HCT116 (cell line): ENCODE measurements at regions of chr14 and their contacts with region 1.

Region 1: DNA sequence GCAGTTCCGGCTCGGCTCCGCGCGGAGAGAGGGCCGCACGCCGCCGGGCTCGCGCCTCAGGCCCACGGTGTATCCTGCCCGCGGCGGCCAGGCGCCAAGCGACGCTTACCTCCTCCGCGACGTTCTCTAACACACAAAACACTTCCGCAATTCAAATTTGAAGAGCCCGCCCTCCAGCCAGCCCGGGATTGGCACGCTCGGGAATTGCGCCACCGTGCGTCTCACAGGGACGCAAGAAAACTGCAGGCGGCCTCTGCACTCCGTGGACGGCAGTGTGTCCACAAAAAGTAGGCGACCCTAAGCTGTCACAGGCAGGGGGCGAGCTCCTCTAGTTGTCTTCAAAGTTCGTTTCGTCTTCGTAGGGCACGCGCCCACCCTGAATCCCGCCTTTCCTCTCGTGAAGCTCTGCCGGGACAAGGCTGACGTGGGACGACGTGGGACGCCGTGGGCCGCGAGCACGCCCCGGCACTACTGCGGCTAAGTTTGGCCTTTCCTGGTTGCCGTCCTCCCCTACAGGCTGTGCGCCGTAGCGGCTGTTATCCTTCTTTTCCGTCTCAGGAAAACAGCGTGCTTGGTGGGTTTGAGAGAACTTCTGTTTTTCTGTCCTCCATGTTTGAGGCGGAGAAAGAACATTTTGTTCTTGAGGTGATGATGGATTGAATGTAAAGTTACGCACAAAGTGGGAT is at the start of gene MIS18BP1:
- DNase-seq: peak; percentile 92
- ATAC-seq: peak; percentile 88
- H3K4me3 ChIP-seq: peak within 1 kb of the TSS; percentile 81 to 91
- H3K27ac ChIP-seq: peak within 1 kb of the TSS; percentile 96
- H3K4me1 ChIP-seq: peaks cover 13 to 22% of the 10 kb centered on the region in 2 experiments
- H3K27me3 ChIP-seq: no peaks in the 10 kb centered on the region
- CTCF ChIP-seq: peak; percentile 59 to 72 (median 68); a peak in 5 of 6 replicates
- POLR2A ChIP-seq: peak; percentile 73
- RAD21 ChIP-seq: peak; percentile 38; the same call in 1 of the 2 replicates
- total RNA-seq, gene MIS18BP1: 37.9 TPM

Region 2: GRCh38 chr14:44897045-44897844 is 356.0 kb before region 1 on chr14:
- CTCF ChIA-PET with region 1: no interaction called
- POLR2A ChIA-PET with region 1: no interaction called
- RAD21 ChIA-PET with region 1: no interaction called
- intact Hi-C with region 1: loop called (anchors 5 kb)
- DNase-seq: peak; percentile 95
- ATAC-seq: peak; percentile 96
- H3K4me3 ChIP-seq: peak overlapping the region; percentile 59 to 71
- H3K27ac ChIP-seq: peak overlapping the region; percentile 83
- H3K4me1 ChIP-seq: peaks cover 8 to 14% of the 10 kb centered on the region in 2 experiments; a peak in 3 of 4 replicates
- H3K27me3 ChIP-seq: no peaks in the 10 kb centered on the region
- CTCF ChIP-seq: no peak
- POLR2A ChIP-seq: peak; percentile 38
- RAD21 ChIP-seq: no peak

Region 3: DNA sequence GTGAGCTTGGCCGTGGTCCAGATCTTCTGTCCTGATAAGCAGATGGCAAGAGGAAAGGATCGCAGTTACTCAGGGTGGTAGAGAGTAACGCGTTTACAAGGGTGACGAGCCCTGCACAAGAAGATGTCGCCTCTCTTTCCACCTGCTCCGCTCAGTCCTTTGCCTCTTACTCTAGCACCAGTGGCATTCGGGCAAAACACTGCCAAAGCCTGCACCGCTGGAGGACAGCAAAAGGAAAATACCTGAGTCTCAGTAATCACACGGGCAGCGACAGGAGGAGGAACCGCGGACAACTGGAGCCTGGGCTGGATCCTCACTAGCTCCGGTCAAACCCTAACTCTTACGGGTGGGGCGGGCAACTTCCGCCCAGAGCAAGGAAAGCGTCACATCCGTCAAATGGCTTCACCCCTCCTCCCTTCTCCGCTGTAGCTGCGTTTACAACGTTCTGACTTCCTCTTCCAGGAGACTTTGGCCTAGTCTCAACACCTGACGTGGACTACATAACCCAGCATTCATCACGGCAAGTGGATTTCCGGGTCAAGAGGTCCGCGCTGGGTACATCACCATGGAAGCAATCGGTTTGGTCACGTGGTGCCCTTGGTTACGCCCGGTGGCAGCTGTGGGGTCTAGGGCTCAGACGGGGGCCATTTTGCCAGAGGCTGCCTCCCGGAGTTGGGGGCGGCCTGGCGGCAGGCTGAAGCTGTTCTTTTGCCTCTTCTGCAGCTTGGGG is 291.4 kb before region 1 on chr14 and contains the starts of genes KLHL28 and TOGARAM1:
- CTCF ChIA-PET with region 1: no interaction called
- POLR2A ChIA-PET with region 1: no interaction called
- RAD21 ChIA-PET with region 1: no interaction called
- intact Hi-C with region 1: loop called (anchors 5 kb)
- DNase-seq: peak; percentile 98
- ATAC-seq: peak; percentile 93
- H3K4me3 ChIP-seq: peak within 1 kb of the TSS; percentile 72 to 94
- H3K27ac ChIP-seq: peak within 1 kb of the TSS; percentile 68
- H3K4me1 ChIP-seq: peaks cover 9 to 11% of the 10 kb centered on the region in 2 experiments; a peak in 3 of 4 replicates
- H3K27me3 ChIP-seq: no peaks in the 10 kb centered on the region
- CTCF ChIP-seq: no peak
- POLR2A ChIP-seq: peak; percentile 94
- RAD21 ChIP-seq: no peak
- total RNA-seq, gene KLHL28: 11.2 TPM
- total RNA-seq, gene TOGARAM1: 1.9 TPM

Region 4: GRCh38 chr14:44995196-44995595 is 258.0 kb before region 1 on chr14:
- CTCF ChIA-PET with region 1: no interaction called
- POLR2A ChIA-PET with region 1: no interaction called
- RAD21 ChIA-PET with region 1: no interaction called
- intact Hi-C with region 1: no loop called
- DNase-seq: no peak
- ATAC-seq: no peak
- H3K4me3 ChIP-seq: no peak overlapping the region
- H3K27ac ChIP-seq: no peak overlapping the region
- H3K4me1 ChIP-seq: no peaks in the 10 kb centered on the region
- H3K27me3 ChIP-seq: no peaks in the 10 kb centered on the region
- CTCF ChIP-seq: no peak
- POLR2A ChIP-seq: no peak
- RAD21 ChIP-seq: no peak

Region 5: GRCh38 chr14:45381091-45381490 is 127.9 kb after region 1 on chr14:
- CTCF ChIA-PET with region 1: no interaction called
- POLR2A ChIA-PET with region 1: no interaction called
- RAD21 ChIA-PET with region 1: no interaction called
- intact Hi-C with region 1: no loop called
- DNase-seq: no peak
- ATAC-seq: no peak
- H3K4me3 ChIP-seq: no peak overlapping the region
- H3K27ac ChIP-seq: no peak overlapping the region
- H3K4me1 ChIP-seq: no peaks in the 10 kb centered on the region
- H3K27me3 ChIP-seq: no peaks in the 10 kb centered on the region
- CTCF ChIP-seq: no peak
- POLR2A ChIP-seq: no peak
- RAD21 ChIP-seq: no peak